ENCODE measurements at regions of chr9 and their contacts with region 1.

Region 1: DNA sequence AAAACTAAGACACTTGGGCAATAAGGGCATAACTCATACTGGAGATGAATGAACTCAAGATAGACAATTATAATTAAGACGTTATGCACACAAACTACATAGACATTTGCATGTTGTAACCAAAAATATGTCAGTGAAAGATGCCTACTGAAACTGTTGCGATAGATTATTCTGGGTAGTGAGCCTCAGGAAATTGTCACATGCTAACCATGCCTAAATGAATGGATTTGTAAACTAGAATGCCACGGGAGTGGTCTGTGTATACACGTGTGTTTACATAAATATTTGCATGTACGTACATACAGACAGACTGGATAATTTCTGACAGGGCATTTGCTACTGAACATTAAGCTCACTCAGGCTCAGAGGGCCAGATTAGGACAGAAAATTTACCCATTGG is 1.2 kb downstream of the NIPSNAP3B start:
- DNase-seq: no peak
- ATAC-seq: no peak
- H3K4me3 Mint-ChIP-seq: peak overlapping the region; percentile 92
- H3K27ac Mint-ChIP-seq: no peak overlapping the region
- H3K4me1 Mint-ChIP-seq: peaks cover 6% of the 10 kb centered on the region
- H3K27me3 Mint-ChIP-seq: no peaks in the 10 kb centered on the region

Region 2: DNA sequence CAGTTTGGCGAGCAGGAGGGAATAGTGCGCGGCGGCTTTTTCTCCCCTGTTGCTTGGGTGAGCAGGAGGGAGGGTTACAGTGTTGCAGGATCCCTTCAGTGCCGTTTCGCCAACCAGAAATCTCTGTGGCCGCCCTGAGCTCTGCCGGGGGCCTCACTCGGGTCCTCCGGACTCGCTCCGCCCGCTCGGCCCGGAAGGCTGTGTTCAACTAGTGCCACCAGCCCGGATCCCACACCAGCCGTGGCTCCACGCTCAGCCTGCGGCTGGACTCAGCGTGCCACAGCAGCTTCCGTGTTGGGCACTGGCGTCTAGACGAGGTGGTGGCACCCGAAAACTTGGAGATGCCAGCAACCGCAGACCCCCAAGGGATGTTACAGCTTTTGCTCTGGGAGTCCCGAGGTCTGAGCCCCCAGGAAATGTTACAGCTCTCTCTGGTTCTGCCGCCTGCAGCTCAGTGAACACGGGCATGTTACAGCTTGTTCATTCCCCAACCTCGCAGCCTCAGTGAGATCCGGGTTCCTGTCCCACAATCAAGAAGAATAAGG is 131.1 kb before region 1 on chr9:
- CTCF ChIA-PET with region 1: no interaction called
- DNase-seq: no peak
- ATAC-seq: no peak
- H3K4me3 Mint-ChIP-seq: no peak overlapping the region
- H3K27ac Mint-ChIP-seq: no peak overlapping the region
- H3K4me1 Mint-ChIP-seq: no peaks in the 10 kb centered on the region
- H3K27me3 Mint-ChIP-seq: no peaks in the 10 kb centered on the region

Region 3: DNA sequence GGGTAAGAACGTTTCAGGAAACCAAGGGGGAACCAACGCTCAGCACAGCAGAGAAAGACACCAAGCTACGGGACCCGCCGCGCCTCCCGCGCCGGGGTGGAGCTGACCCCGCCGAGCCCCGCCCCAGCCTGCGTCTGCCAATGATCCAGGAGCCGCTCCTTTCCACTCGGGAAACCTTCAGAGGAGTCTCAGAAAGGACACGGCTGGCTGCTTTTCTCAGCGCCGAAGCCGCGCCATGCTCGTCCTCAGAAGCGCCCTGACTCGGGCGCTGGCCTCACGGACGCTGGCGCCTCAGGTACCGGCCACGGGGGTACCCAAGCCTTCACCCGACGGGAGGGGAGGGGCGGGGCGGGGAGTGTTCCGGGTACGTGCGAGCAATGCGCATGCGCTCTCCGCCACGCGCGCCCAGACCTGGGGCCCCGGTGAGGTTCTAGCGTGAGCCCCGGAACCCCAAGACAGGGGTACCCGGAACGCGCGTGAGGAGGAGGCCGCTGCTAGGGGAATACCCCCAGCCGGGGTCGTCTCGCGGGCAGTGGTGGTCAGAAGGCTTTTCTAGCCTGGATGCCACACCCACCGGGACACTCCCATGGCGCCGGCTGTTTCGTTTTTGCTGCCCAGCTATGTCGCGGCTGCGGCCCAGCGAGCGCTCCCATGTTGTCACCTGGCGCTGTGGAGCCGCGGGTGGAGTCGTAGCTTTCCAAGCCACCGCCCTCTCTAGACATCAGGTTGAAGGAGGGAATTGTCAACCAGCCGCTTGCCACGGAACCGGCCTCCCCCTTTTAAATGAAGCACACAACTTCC is 17.4 kb before region 1 on chr9 and contains the start of gene NIPSNAP3A:
- CTCF ChIA-PET with region 1: interaction called, 10 read pairs
- DNase-seq: peak; percentile 91
- ATAC-seq: peak; percentile 94
- H3K4me3 Mint-ChIP-seq: peak within 1 kb of the TSS; percentile 91
- H3K27ac Mint-ChIP-seq: peak within 1 kb of the TSS; percentile 90
- H3K4me1 Mint-ChIP-seq: peaks cover 21% of the 10 kb centered on the region
- H3K27me3 Mint-ChIP-seq: no peaks in the 10 kb centered on the region
- total RNA-seq, gene NIPSNAP3A: 14.1 to 16.2 TPM